Dorsolateral prefrontal cortex (tissue), 120 donors: ENCODE measurements at regions of chr17 and their contacts with region 1.

Region 1: DNA sequence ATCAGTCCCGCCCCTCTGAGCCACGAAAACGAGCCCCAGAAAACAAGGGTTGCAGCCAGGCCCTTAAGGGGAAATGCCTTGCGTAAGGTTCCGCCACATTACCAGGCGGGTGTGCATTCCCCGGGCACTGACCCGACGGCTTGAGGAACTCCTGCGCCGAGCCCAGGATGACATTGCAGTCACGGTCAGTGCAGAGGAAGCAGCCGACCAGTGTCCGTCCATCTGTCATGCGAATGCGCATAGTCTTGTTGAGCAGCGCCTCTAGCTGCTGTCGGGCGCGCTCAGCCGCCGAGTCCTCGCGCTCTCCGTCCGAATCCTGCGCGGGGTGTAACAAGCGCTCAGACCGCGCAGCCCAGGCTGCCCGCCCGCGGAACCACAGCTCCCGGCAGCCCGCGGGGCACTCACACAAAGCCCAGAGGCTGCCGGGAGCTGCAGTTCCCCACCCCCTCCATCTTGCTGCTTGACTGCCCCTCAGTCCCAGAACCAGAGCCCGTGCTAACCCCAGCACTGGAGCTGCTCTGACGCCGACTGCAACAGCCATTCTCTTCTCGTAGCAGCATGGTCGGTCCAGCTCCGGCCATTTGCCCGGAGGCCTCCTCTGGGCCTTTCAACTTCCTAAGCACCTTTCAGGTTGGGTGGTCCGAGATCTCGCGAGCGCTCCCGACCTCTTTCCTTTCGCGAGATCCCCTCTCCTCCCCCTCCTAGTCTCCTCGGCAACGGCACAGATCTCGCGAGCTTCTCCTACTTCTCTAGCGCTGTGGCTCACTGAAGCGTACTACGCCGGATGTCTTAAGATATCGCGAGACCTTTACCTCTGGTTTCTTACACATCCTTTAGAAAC is at the start of gene NAA38:
- DNase-seq: peak; percentile 91 to 99 (median 95)
- H3K4me3 ChIP-seq: peak within 1 kb of the TSS; percentile 63 to 99 (median 86)
- H3K27ac ChIP-seq: peak within 1 kb of the TSS; percentile 87 to 99 (median 97)
- H3K27me3 ChIP-seq: no peaks in the 10 kb centered on the region
- CTCF ChIP-seq: peak; percentile 29 to 83 (median 62)
- total RNA-seq, gene NAA38: 46.8 to 127 (median 87.8) TPM

Region 2: DNA sequence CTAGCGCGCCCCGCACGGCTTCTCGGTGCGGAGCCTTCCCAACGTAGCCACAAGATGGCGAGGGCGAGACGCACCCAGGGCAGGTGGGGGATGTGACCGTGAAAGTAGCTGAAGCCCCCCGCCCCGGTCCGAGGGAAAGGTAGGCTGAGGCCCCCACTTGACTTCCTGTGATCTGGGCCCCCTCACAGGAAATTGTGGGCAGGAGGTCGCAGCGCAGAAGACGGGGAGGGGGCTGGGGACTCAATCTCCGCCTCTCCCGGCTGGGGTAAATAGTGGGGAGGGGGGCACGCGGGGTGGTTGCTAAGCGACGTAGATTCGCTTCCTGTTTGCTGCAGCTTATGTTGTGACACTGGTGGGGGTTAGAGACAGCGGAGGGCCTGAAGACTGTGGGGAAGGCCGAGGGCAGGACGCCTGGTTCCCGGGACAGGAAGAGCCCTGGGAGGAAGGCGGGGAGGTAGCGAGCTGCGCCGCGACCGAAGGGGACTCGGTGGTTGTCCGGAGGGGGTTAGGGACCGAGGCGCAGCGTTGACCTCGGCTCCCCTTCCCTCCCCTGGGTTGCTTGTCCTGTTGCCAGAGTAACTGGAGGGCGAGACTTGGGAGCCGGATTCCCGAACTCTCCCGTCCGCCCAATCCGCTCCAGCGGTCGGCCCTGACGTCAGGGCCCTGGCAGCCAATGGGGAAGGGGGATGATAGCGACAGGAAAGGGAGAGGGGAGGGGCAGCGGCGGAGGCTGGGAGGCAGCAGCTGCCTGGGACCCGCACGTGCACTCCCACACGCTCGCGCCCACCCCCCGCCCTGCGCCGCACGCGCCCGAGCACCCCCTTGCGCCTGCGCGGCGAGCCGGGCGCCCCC is 21.9 kb before region 1 on chr17:
- intact Hi-C with region 1: loop called (anchors 2 kb)
- DNase-seq: peak; percentile 92 to 98 (median 96)
- H3K4me3 ChIP-seq: peak overlapping the region; percentile 54 to 100 (median 86)
- H3K27ac ChIP-seq: peak overlapping the region; percentile 55 to 99 (median 95)
- H3K27me3 ChIP-seq: no peaks in the 10 kb centered on the region
- CTCF ChIP-seq: peak; percentile 28 to 89 (median 76)

Region 3: DNA sequence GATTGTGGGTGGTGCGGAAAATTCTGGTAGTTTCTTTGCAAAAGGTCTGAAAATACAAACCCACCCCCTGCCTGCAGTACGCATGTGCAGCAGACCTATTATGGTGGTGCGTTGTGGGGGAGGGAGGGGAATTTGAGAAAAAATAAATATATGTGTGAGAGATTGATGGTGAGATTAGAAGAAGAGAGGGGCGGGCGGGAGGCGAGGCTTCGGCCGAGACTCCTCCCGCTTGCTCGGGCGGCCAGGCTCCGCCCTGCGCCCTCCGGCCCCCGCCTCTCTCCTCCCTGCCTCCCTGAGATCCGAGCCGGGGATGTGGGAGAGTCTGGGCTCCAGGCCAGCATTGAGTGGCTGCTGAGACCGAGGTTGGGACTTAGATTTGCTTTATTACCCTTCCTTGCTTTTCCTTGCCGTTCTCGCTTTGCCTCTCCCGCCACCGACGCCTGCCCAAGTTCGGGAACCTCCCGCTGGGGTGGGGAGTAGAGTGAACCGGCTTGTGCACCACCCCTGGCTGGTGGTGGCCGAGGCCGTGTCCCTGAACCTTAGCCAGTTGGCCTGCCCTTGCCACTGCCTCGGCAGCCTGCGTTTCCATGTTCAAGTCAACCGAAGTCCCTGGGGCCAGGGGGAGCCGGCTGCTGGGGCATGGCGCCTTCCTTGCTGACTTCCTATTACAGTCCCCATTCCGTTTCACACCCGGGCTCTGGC is 30.5 kb after region 1 on chr17:
- intact Hi-C with region 1: loop called in 1 of 2 experiments (anchors 2 kb)
- DNase-seq: peak; percentile 76 to 95 (median 90)
- H3K4me3 ChIP-seq: peak overlapping the region; percentile 30 to 87 (median 73)
- H3K27ac ChIP-seq: peak overlapping the region; percentile 26 to 99 (median 92)
- H3K27me3 ChIP-seq: no peaks in the 10 kb centered on the region
- CTCF ChIP-seq: peak in 14 of 56 donors; percentile 7 to 49 (median 22)

Region 4: DNA sequence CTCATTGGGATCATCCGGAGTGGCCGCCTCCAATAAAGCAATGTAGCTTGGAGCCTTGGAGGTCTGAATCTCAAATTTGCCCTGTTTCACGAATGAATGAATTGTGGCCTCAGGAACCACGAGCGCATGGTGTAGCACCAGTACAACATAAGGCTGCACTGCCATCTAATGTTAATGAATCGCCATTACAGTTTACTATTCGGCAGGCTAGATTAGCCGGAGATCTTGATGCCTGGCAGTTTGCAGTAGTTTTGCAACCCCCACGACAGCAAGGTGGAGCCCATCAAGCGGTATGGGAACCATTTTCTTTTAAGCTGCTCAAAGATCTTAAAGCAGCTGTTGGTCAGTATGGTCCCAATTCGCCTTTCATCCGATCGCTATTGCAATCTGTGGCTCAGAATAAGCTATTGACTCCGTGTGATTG is 200.6 kb after region 1 on chr17:
- intact Hi-C with region 1: loop called (anchors 5 kb)
- DNase-seq: peak in 7 of 10 donors; percentile 25 to 58 (median 48)
- H3K4me3 ChIP-seq: peak overlapping the region in 4 of 59 donors; percentile 1 to 35 (median 11)
- H3K27ac ChIP-seq: no peak overlapping the region
- H3K27me3 ChIP-seq: peaks cover 0 to 53% (median 34%) of the 10 kb centered on the region in 45 donors
- CTCF ChIP-seq: peak; percentile 56 to 93 (median 80)